BJ (cell line): ENCODE measurements at regions of chr11 and their contacts with region 1.

Region 1: DNA sequence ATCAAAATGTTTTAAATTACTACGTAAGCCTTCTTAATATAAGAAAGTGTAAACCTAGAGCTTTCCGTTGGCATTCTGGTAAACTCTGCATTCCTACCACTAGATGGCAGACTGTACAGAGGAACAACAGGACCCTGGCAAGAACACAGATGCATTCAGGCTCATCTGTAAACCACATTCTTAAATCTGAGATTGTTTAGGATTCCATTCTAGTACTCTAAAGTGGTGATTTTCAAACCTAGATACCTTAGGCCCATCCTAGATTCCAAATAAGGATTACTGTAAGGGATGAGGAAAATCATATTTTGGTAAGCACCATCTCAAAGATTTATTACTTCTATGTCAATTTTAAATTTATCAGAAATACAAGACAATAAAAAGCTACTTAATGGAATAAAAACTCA is 26.9 kb downstream of the PICALM start:
- DNase-seq: peak; percentile 60
- H3K4me3 ChIP-seq: no peak overlapping the region
- H3K27me3 ChIP-seq: no peaks in the 10 kb centered on the region
- CTCF ChIP-seq: peak; percentile 78

Region 2: GRCh38 chr11:85821636-85822035 is 220.3 kb before region 1 on chr11:
- CTCF ChIA-PET with region 1: no interaction called
- POLR2A ChIA-PET with region 1: no interaction called
- DNase-seq: no peak
- H3K4me3 ChIP-seq: no peak overlapping the region
- H3K27me3 ChIP-seq: no peaks in the 10 kb centered on the region
- CTCF ChIP-seq: no peak

Region 3: DNA sequence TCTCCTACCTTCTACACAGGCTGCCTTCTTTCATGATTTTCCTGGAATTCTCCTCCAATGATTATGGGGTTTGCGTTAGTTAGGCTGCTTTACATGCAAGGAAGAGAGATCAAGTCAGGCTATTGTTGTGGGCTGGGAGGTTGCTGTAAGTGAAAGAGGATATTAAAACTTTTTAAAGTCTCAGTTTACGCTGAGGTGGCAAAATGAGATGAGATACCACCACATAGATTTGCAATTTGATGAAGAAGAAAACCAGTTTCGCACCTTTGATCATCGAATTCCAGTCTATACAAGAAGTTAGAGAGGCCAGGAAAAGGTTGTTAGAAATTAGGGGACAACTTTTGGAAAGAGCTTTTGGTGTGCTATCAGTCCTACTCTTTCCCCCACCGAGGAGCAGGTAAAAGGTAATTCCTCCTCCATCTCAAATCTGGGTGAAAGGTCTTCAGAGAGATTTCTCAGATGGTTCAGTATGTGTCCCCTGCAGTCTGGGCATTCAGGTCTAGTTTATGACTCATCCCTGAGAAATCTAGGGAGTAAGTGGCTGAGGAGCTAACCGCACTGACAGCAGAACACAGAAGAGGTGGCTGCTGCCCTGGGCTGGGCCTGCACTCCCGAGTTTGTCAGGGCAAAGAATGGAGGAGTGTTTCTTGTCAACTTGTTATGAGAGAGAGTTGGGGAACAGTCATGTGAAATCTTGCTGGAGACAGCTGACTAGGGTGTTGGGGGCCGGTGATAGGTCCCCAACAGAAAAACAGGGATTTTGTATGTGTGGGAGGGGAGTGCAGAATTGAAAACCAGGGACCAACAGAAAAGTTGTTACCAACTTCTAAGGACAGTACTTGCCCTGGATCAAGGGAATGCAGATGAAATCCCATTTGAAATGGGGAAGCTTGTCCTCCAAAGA is 152.0 kb before region 1 on chr11:
- CTCF ChIA-PET with region 1: no interaction called
- POLR2A ChIA-PET with region 1: no interaction called
- DNase-seq: no peak
- H3K4me3 ChIP-seq: no peak overlapping the region
- H3K27me3 ChIP-seq: no peaks in the 10 kb centered on the region
- CTCF ChIP-seq: no peak

Region 4: DNA sequence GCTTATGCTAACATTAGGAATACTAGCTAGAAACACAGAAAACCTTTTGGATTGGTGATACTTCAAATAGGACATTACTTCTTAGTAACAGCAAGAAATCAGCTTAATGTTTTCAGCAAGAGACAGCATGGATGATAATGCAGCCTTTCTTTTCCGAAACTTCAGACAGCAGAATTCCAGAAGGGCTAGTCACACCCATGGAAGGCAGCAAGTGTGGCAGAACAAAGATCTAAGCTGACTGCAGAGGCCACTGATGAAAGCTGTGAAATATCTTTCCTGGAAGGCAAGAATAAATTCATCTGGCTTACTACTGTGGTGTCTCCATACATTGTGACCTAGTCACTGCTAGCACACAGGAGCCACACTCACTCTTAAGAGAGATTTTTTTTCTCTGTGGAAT is 86.4 kb before region 1 on chr11:
- CTCF ChIA-PET with region 1: no interaction called
- POLR2A ChIA-PET with region 1: no interaction called
- DNase-seq: no peak
- H3K4me3 ChIP-seq: no peak overlapping the region
- H3K27me3 ChIP-seq: no peaks in the 10 kb centered on the region
- CTCF ChIP-seq: no peak

Region 5: DNA sequence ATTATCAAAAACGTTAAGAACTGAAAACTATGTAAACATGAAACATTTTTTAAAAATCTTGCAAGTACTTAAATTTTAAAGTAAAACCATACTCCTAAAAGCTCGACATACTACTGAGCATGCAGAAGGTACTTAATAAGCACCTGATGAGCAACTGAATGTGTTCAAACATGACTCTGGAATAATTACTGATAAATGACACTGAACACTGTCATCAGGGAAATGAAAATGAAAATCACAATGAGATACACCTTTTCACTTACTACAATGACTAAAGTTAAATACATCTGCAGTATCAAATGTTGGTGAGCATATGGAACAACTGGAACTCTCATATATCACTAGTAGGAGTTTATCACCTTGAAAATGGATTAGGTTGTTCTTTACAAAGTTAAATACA is 38.3 kb before region 1 on chr11:
- CTCF ChIA-PET with region 1: no interaction called
- POLR2A ChIA-PET with region 1: no interaction called
- DNase-seq: no peak
- H3K4me3 ChIP-seq: no peak overlapping the region
- H3K27me3 ChIP-seq: no peaks in the 10 kb centered on the region
- CTCF ChIP-seq: no peak

Region 6: DNA sequence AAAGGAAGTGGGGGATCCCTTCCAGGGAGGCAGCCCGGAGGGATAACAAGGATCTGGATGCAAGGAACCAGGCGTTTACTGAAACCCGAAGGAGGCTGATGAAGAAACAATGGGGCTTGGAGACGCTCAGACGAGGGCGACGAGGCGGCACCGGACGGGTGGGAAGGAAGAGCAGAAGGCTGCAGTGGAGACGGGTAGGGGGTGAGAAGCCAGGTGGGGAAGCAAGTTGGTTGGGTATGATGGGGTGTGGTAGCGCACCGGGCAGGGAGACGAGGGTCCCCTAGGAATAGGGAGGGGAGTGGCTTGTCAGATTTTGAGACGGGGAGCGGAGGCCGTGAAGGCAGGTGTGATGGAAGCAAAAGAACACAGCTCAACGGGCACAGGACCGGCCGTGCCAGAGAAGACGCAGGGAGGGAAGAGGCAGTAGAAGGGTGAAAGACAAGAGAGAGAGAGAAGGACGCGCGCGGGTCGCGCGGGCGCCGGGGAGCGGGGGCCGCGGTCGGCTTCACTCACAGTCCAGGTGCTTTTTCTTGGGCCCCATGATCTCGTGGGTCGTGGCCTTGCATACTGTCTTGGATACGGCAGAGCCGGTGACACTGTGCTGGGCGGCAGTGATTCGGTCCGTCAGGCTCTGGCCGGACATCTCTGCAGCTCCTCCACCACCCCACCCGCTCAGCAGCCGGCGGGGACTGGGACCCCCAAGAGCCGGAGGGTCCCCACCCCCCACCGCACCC is 26.3 kb after region 1 on chr11:
- CTCF ChIA-PET with region 1: interaction called, 12 read pairs
- POLR2A ChIA-PET with region 1: no interaction called
- DNase-seq: no peak
- H3K4me3 ChIP-seq: peak overlapping the region; percentile 62
- H3K27me3 ChIP-seq: no peaks in the 10 kb centered on the region
- CTCF ChIP-seq: no peak

Region 7: GRCh38 chr11:86193297-86194095 is 151.5 kb after region 1 on chr11:
- CTCF ChIA-PET with region 1: interaction called, 19 read pairs
- POLR2A ChIA-PET with region 1: no interaction called
- DNase-seq: no peak
- H3K4me3 ChIP-seq: no peak overlapping the region
- H3K27me3 ChIP-seq: no peaks in the 10 kb centered on the region; the same call in 1 of the 2 replicates
- CTCF ChIP-seq: peak; percentile 73

Region 8: DNA sequence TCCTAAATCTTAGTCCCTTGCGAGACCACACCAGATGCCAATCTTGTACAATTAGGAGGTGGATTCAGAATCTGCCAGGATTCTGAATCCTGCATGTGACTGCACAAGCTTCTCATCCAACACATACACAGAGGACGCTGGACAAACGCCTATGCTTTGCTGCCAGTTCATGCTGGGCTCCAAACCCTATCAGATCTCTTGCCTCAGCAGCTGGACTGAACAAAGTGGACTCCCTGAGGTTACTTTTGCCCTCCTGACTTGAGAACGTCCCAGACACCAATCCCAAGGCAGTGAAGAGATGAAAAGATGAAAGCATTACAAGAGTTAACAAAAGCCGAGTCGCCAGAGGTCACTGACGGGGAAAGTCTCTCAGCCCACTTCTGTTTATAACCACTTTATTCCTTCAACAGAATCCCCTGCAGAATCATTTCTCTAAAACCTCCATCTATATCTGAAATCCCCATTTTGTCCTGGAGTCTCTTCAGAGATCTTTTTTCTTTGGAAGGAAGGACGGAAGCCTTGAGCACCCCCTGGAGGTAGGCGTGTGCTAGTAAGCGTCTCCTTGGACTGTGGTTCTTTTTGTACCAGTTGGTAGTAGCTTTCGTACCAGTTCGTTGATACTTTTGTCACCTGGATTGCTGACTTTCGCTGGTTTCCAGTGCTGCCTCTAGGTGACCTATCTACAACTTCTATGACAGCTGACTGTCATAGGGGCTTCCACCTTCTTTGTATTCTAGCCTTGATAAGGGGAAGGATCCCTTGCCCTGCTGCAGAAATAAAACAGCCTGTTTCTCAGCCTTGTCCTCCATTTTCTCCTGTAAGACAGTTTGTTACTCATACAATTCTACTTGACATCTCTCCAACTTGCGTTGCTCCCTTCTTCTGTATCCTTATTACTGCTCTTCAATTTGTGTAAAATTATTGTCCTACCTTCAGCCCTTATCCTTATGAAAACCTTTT is 176.4 kb after region 1 on chr11:
- CTCF ChIA-PET with region 1: interaction called, 22 read pairs
- POLR2A ChIA-PET with region 1: no interaction called
- DNase-seq: no peak
- H3K4me3 ChIP-seq: no peak overlapping the region
- H3K27me3 ChIP-seq: no peaks in the 10 kb centered on the region
- CTCF ChIP-seq: peak; percentile 96